Activated CD8-positive, alpha-beta T cell treated with anti-CD3 and anti-CD28 coated beads for 36 hours (primary cell): ENCODE measurements at regions of chr2 and their contacts with region 1.

Region 1: DNA sequence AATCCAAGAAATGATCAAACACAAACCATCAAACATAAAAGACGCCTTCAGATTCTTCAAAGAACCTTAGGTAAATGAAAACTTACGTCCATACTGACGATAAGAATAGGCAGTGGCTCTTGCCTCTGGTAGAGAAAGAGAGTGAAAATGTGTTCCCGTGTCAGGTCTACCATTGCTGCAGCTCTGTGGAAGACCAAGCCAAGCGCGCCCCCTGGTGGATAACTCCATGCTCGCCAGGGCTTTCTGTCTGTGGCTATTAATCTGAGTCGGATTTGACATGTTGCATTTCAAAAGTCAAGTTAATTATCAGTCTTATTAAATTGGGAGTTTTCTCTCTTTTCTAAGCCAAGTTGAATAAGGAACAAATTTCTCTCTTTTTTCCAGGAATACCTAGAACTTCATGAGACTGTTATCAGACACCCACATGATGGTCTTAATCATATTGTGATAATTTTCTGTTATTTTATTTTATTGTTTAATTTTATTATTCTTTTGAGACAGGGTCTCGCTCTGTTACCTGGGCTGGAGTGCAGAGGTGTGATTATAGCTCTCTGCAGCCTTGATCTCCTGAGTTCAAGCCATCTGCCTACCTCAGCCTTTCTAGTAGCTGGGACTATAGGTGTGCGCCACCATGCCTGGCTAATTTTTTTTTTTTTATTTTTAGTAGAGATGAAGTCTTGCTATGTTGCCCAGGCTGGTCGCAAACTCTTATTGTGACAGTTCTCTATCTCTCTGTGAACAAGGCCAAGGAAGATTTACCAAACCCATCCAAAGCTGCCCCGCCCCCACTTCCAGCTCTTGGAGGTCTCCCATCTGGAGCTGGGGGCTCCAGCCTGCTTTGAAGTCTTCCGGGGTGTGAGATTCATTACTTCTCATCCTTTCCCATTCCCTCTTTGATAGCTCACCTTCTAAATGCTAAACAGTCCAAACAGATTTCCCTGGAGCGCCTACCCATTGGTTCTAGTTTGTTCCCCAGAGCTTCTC is 15.8 kb upstream of the ZAP70 start:
- DNase-seq: peak; percentile 97
- ATAC-seq: peak; percentile 89
- H3K4me3 Mint-ChIP-seq: peak overlapping the region; percentile 34
- H3K27ac Mint-ChIP-seq: no peak overlapping the region
- H3K4me1 Mint-ChIP-seq: peaks cover 10% of the 10 kb centered on the region
- H3K27me3 Mint-ChIP-seq: no peaks in the 10 kb centered on the region
- CTCF ChIP-seq: peak; percentile 84

Region 2: GRCh38 chr2:97651114-97651513 is 46.4 kb before region 1 on chr2:
- CTCF ChIA-PET with region 1: interaction called, 33 read pairs
- POLR2A ChIA-PET with region 1: interaction called, 7 read pairs
- intact Hi-C with region 1: no loop called
- DNase-seq: no peak
- ATAC-seq: no peak
- H3K4me3 Mint-ChIP-seq: no peak overlapping the region
- H3K27ac Mint-ChIP-seq: peak overlapping the region; percentile 54
- H3K4me1 Mint-ChIP-seq: peaks cover 23% of the 10 kb centered on the region
- H3K27me3 Mint-ChIP-seq: no peaks in the 10 kb centered on the region
- CTCF ChIP-seq: no peak

Region 3: DNA sequence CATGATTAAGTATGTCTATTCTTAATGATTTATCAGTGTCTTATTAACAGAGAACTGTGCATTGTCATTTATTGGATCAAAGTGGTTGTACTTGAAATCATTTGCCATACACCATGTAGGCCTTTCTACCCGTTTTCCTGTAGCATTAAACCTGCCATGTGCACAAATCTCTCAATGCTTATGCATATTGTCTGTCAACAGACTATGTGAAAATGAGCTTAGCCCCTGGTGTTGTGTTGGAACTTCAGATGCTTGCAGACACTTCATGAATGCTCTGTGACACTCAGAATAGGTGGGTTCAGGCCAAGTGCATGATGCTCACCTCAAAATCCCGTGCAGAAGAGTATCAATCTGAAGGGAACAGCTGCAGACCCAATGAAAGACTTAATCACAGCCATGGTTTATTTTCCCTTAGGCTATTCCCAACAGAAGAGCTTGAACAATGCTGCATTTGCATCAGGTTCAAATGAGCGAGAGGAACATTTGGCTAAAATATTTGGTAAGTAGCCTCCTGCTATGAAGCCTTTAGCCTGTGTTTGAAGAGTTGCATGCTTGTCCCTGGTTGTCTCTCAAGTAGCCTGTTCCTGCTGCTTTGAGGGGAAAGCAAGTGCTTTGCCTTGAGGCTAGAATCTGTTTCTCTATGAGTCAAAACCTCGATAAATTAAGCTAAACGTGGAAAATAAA is 22.0 kb before region 1 on chr2:
- CTCF ChIA-PET with region 1: interaction called, 12 read pairs
- POLR2A ChIA-PET with region 1: interaction called, 6 read pairs
- intact Hi-C with region 1: no loop called
- DNase-seq: no peak
- ATAC-seq: no peak
- H3K4me3 Mint-ChIP-seq: no peak overlapping the region
- H3K27ac Mint-ChIP-seq: no peak overlapping the region
- H3K4me1 Mint-ChIP-seq: peaks cover 31% of the 10 kb centered on the region
- H3K27me3 Mint-ChIP-seq: peaks cover 1% of the 10 kb centered on the region
- CTCF ChIP-seq: no peak

Region 4: DNA sequence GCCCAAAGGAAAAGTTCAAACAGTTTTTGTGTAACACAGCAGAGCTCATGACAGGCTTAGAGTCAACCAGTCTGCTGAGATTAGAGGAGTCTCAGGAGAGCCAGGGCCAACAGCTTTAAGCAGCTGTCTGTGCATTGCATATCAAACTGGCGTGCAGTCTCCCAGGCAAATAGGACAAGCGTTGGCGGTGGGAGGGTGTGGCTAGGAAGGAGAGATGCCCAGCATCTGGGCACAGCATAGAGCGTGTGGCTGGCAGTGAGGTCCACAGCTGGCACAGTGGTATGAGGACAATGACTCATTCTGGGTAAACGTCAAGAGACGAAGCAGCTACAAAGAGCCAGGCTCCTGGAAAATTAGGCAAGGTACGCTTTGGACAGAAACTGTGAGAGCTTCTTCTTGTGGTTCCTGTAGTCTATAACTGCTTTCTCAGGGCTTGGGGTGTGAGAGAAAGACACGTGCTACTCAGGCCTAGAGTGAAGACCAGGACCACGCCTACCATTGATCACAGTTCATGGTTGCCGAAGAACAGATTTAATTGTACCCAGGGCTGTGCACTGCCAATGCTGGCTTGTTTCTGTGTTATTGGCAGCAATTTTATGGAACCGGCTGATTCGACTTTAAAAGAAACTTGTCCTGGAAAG is 30.7 kb after region 1 on chr2:
- CTCF ChIA-PET with region 1: interaction called, 12 read pairs
- POLR2A ChIA-PET with region 1: no interaction called
- intact Hi-C with region 1: no loop called
- DNase-seq: peak; percentile 63
- ATAC-seq: peak; percentile 78
- H3K4me3 Mint-ChIP-seq: no peak overlapping the region
- H3K27ac Mint-ChIP-seq: peak overlapping the region; percentile 86
- H3K4me1 Mint-ChIP-seq: peaks cover 68% of the 10 kb centered on the region
- H3K27me3 Mint-ChIP-seq: no peaks in the 10 kb centered on the region
- CTCF ChIP-seq: no peak

Region 5: GRCh38 chr2:97751752-97752151 is 54.2 kb after region 1 on chr2:
- CTCF ChIA-PET with region 1: interaction called, 50 read pairs
- POLR2A ChIA-PET with region 1: interaction called, 5 read pairs
- intact Hi-C with region 1: no loop called
- DNase-seq: no peak
- ATAC-seq: no peak
- H3K4me3 Mint-ChIP-seq: no peak overlapping the region
- H3K27ac Mint-ChIP-seq: no peak overlapping the region
- H3K4me1 Mint-ChIP-seq: peaks cover 19% of the 10 kb centered on the region
- H3K27me3 Mint-ChIP-seq: no peaks in the 10 kb centered on the region
- CTCF ChIP-seq: no peak

Region 6: GRCh38 chr2:97834610-97835009 is 137.1 kb after region 1 on chr2:
- CTCF ChIA-PET with region 1: no interaction called
- POLR2A ChIA-PET with region 1: no interaction called
- intact Hi-C with region 1: no loop called
- DNase-seq: no peak
- ATAC-seq: no peak
- H3K4me3 Mint-ChIP-seq: no peak overlapping the region
- H3K27ac Mint-ChIP-seq: peak overlapping the region; percentile 59
- H3K4me1 Mint-ChIP-seq: peaks cover 14% of the 10 kb centered on the region
- H3K27me3 Mint-ChIP-seq: no peaks in the 10 kb centered on the region
- CTCF ChIP-seq: no peak